H1 (cell line): ENCODE measurements at regions of chr22 and their contacts with region 1.

Region 1: GRCh38 chr22:46661221-46661851 is 41.1 kb downstream of the GRAMD4 start:
- DNase-seq: no peak
- H3K4me3 ChIP-seq: no peak overlapping the region
- H3K27ac ChIP-seq: no peak overlapping the region
- H3K4me1 ChIP-seq: peaks cover 0 to 2% (median 0%) of the 10 kb centered on the region in 4 experiments; a peak in 1 of 7 replicates
- H3K27me3 ChIP-seq: no peaks in the 10 kb centered on the region
- CTCF ChIP-seq: no peak
- EP300 ChIP-seq: no peak
- POLR2A ChIP-seq: no peak
- RAD21 ChIP-seq: no peak

Region 2: GRCh38 chr22:46672731-46673130 is 11.4 kb after region 1 on chr22:
- CTCF ChIA-PET with region 1: interaction called, 13 read pairs
- POLR2A ChIA-PET with region 1: no interaction called
- DNase-seq: no peak
- H3K4me3 ChIP-seq: no peak overlapping the region
- H3K27ac ChIP-seq: no peak overlapping the region
- H3K4me1 ChIP-seq: no peaks in the 10 kb centered on the region
- H3K27me3 ChIP-seq: no peaks in the 10 kb centered on the region
- CTCF ChIP-seq: no peak
- EP300 ChIP-seq: no peak
- POLR2A ChIP-seq: no peak
- RAD21 ChIP-seq: no peak

Region 3: GRCh38 chr22:46693634-46694415 is 32.5 kb after region 1 on chr22:
- CTCF ChIA-PET with region 1: no interaction called
- POLR2A ChIA-PET with region 1: no interaction called
- DNase-seq: no peak
- H3K4me3 ChIP-seq: no peak overlapping the region
- H3K27ac ChIP-seq: no peak overlapping the region
- H3K4me1 ChIP-seq: no peaks in the 10 kb centered on the region; a peak in 1 of 7 replicates
- H3K27me3 ChIP-seq: no peaks in the 10 kb centered on the region
- CTCF ChIP-seq: no peak
- EP300 ChIP-seq: no peak
- POLR2A ChIP-seq: no peak
- RAD21 ChIP-seq: no peak